A549 (cell line): ENCODE measurements at regions of chr10 and their contacts with region 1.

Region 1: DNA sequence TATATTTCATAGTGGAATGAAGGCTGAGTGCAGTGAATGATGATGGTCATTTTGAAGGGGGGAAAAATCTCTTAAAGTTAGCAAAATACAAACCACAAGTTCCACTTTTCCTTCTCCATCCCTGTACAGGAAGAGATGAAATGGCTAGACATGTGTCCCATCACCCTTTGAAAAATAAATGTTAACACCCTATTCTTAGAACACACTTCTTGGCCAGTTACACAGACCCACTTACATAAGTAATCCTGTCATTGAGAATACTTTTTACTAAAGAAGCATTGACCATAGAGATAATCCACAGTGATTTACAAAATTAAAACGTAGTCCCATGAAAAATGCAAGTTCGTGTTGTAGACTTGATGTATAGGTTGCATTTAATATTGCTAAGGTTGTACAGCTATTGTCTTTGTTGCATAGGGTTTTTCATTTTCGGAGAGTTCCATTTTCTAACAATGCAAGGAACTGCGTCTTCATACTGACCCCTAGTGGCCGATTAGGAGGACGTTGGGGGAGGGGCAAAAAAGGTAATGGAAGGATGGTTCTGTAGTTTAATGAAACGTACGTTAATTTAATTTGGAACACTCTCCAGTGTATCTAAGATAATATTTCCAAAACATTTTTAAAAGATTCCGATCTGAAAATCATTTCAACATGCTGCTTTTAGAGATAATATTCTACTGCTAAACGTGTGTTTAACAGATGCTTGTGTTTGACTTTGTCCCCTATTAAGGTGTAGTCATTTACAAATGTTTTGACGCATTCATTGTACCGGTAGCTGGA is 60.9 kb downstream of the ARMC3 start:
- DNase-seq: peak; percentile 25 to 60
- ATAC-seq: peak; percentile 54 to 71; a peak in 3 of 6 replicates
- H3K4me3 ChIP-seq: no peak overlapping the region
- H3K27ac ChIP-seq: no peak overlapping the region
- H3K4me1 ChIP-seq: no peaks in the 10 kb centered on the region; the same call in 2 of the 3 replicates
- CTCF ChIP-seq: peak; percentile 95
- EP300 ChIP-seq: no peak
- POLR2A ChIP-seq: no peak
- RAD21 ChIP-seq: peak; percentile 95 to 96

Region 2: DNA sequence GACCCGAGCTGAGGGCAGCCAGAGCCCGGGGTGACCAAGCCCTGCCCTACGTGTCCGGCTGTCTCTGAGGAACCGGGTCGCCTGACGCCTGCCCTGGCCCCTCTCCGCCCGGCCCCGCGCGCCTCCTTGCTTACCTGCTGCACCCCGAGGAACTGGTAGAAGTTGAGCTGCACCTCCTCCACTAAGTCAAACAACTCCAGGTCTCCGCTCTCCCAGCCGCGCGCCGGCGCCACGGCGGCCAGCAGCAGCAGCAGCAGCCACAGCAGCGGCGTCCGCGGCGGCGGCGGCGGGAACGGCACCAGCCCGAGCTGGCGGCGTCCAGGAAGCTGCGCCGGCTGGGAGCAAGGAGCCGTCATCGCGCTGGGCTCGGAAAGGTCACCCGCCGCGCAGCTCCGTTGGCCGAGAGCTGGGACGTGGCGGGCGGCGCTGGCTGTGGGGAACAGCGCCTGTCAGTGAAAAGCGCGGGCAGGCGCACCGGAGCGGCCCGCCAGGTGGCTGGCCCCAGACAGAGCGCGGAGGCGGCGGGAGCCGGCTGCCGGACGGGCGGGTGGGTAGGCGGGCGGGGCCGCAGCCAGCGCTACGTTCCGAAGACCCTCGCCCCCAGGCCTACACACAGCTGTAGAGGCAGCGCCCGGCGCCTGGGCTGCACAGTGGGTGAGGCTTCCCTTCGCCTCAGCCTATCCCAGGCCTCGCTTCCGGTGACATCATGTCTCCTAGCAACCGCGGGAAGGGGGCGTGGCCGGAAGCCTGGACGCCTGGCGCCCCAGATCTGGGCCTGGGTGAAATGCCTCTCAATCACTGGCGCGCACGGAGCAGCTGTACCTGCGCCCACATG is 985.5 kb before region 1 on chr10 and contains the start of gene DNAJC1:
- CTCF ChIA-PET with region 1: interaction called, 11 read pairs
- POLR2A ChIA-PET with region 1: no interaction called
- DNase-seq: peak; percentile 91 to 96
- ATAC-seq: peak; percentile 95 to 99
- H3K4me3 ChIP-seq: peak within 1 kb of the TSS; percentile 76
- H3K27ac ChIP-seq: peak within 1 kb of the TSS; percentile 77 to 91
- H3K4me1 ChIP-seq: peaks cover 11% of the 10 kb centered on the region; the same call in 1 of the 3 replicates
- CTCF ChIP-seq: no peak
- EP300 ChIP-seq: no peak
- POLR2A ChIP-seq: peak; percentile 70
- RAD21 ChIP-seq: no peak; a peak in 1 of 5 replicates
- polyA plus RNA-seq, gene DNAJC1: 29.8 and 34.2 TPM in 2 replicates

Region 3: GRCh38 chr10:22573820-22574569 is 414.8 kb before region 1 on chr10:
- CTCF ChIA-PET with region 1: interaction called, 13 read pairs
- POLR2A ChIA-PET with region 1: interaction called, 5 read pairs
- DNase-seq: peak; percentile 16 to 27
- ATAC-seq: peak in 1 of 2 experiments; percentile 49; a peak in 1 of 6 replicates
- H3K4me3 ChIP-seq: no peak overlapping the region
- H3K27ac ChIP-seq: no peak overlapping the region
- H3K4me1 ChIP-seq: no peaks in the 10 kb centered on the region
- CTCF ChIP-seq: peak; percentile 59
- EP300 ChIP-seq: no peak
- POLR2A ChIP-seq: no peak
- RAD21 ChIP-seq: peak; percentile 57 to 61

Region 4: DNA sequence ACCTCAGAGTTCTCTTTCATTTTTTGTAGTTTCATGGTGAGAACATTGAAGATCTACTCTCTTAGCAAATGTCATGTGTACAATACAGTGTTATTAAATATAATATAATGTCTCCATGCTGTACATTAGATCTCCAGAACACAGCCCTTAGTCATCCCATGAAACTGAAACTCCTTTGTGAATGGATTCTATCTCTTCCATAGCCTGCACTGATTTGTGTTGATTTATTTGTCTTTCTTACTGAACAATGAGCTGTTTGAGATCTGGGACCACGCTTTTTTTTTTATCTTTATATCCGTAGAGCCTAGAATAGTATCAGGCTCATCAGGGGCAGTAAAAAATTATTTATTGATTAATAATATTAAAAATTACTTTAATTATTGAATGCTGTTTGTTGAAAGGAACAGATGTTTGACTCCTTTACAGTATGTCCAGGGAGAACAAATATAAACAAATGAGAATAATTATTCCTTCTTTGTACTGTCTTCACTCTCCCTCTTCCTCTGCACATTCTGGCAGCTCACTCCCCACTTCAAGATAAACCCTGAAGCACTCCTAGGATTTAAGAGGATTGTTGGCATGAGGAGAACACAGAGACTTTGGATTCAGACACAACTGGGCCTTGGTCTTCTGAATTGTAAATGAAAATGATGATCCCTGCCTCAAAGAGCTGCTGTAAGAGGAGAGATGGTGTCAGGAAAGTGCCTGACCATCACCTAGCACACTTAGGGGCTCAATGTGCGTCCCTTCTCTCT is 25.0 kb after region 1 on chr10:
- CTCF ChIA-PET with region 1: interaction called, 11 read pairs
- POLR2A ChIA-PET with region 1: no interaction called
- DNase-seq: no peak
- ATAC-seq: no peak
- H3K4me3 ChIP-seq: no peak overlapping the region
- H3K27ac ChIP-seq: no peak overlapping the region
- H3K4me1 ChIP-seq: no peaks in the 10 kb centered on the region
- CTCF ChIP-seq: no peak
- EP300 ChIP-seq: no peak
- POLR2A ChIP-seq: no peak
- RAD21 ChIP-seq: no peak

Region 5: DNA sequence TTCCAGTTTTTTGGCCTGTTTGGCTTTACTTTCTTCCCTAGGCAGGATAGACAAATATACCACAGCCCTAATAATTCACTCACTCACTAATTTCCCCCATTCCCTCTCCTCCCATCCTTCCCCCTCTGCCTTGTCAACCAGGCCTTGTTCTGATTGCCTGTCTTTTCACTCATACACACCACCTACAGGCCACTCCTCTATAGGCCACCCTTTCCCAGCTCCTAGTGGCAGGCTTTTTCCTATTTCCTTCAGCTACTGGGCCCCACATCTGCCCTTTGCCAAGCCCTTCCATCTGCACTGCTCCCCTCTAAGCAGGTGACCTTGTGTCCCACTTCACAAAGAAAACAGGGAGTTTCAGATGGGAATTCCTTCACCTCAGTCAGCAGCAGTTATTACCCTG is 46.8 kb after region 1 on chr10:
- CTCF ChIA-PET with region 1: no interaction called
- POLR2A ChIA-PET with region 1: no interaction called
- DNase-seq: peak in 1 of 2 experiments; percentile 26
- ATAC-seq: peak; percentile 94 to 98
- H3K4me3 ChIP-seq: no peak overlapping the region
- H3K27ac ChIP-seq: no peak overlapping the region
- H3K4me1 ChIP-seq: no peaks in the 10 kb centered on the region
- CTCF ChIP-seq: no peak
- EP300 ChIP-seq: no peak
- POLR2A ChIP-seq: no peak
- RAD21 ChIP-seq: 0 out of 5 replicates have a peak, but pooled peaks of 1 of the 2 experiments have one; percentile 12

Region 6: DNA sequence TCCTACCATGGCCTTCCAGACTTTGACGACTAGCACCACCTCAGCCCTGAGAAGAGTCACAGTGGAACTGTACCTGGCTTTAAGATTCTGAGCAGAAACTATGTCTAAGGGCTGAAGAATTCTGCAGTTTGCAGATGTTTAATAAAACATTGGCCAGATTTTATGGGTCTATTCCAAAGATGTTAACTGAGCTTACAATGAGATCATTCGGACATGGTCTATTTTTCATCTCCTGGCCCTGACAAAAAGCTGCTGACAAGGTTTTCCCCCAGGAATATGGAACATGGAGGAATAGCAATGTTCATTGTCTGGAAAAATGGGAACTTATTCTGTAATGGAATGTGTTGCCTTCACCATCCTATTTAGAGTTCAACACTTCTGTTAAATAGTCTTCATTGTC is 269.7 kb after region 1 on chr10:
- CTCF ChIA-PET with region 1: no interaction called
- POLR2A ChIA-PET with region 1: no interaction called
- DNase-seq: no peak
- ATAC-seq: no peak
- H3K4me3 ChIP-seq: no peak overlapping the region
- H3K27ac ChIP-seq: no peak overlapping the region
- H3K4me1 ChIP-seq: no peaks in the 10 kb centered on the region
- CTCF ChIP-seq: no peak
- EP300 ChIP-seq: no peak
- POLR2A ChIP-seq: no peak
- RAD21 ChIP-seq: no peak